CD4-positive, alpha-beta T cell (primary cell): ENCODE measurements at regions of chr21 and their contacts with region 1.

Region 1: GRCh38 chr21:43740497-43741156 is 21.7 kb downstream of the PDXK start:
- DNase-seq: peak in 2 of 14 experiments; percentile 75 to 81
- ATAC-seq: peak; percentile 48
- H3K4me3 ChIP-seq: no peak overlapping the region
- H3K4me3 Mint-ChIP-seq: peak overlapping the region; percentile 65
- H3K27ac ChIP-seq: no peak overlapping the region
- H3K27ac Mint-ChIP-seq: peak overlapping the region; percentile 83
- H3K4me1 ChIP-seq: peaks cover 3% of the 10 kb centered on the region
- H3K4me1 Mint-ChIP-seq: peaks cover 12% of the 10 kb centered on the region
- H3K27me3 ChIP-seq: no peaks in the 10 kb centered on the region
- H3K27me3 Mint-ChIP-seq: no peaks in the 10 kb centered on the region
- CTCF ChIP-seq: no peak

Region 2: DNA sequence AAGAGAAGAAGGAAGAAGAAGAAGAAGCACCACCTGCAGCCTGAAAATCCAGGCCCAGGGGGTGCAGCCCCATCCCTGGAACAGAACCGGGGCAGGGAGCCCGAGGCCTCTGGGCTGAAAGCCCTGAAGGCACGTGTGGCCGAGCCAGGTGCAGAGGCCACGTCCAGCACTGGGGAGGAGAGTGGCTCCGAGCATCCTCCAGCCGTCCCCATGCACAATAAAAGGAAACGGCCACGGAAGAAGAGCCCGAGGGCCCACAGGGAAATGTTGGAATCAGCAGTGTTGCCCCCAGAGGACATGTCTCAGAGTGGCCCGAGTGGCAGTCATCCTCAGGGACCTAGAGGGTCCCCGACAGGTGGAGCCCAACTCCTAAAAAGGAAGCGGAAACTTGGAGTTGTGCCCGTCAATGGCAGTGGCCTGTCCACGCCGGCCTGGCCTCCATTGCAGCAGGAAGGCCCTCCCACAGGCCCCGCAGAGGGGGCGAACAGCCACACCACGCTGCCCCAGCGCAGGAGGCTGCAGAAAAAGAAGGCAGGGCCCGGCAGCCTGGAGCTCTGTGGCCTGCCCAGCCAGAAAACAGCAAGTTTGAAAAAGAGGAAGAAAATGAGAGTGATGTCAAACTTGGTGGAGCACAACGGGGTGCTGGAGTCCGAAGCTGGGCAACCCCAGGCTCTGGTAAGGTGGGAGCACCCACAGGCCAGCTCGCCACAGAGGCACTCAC is 52.9 kb before region 1 on chr21:
- CTCF ChIA-PET with region 1: no interaction called
- POLR2A ChIA-PET with region 1: no interaction called
- intact Hi-C with region 1: loop called in 1 of 2 experiments (anchors 10 kb)
- DNase-seq: no peak
- ATAC-seq: no peak
- H3K4me3 ChIP-seq: no peak overlapping the region
- H3K4me3 Mint-ChIP-seq: no peak overlapping the region
- H3K27ac ChIP-seq: no peak overlapping the region
- H3K27ac Mint-ChIP-seq: no peak overlapping the region
- H3K4me1 ChIP-seq: no peaks in the 10 kb centered on the region
- H3K4me1 Mint-ChIP-seq: no peaks in the 10 kb centered on the region
- H3K27me3 ChIP-seq: no peaks in the 10 kb centered on the region
- H3K27me3 Mint-ChIP-seq: no peaks in the 10 kb centered on the region
- CTCF ChIP-seq: no peak

Region 3: DNA sequence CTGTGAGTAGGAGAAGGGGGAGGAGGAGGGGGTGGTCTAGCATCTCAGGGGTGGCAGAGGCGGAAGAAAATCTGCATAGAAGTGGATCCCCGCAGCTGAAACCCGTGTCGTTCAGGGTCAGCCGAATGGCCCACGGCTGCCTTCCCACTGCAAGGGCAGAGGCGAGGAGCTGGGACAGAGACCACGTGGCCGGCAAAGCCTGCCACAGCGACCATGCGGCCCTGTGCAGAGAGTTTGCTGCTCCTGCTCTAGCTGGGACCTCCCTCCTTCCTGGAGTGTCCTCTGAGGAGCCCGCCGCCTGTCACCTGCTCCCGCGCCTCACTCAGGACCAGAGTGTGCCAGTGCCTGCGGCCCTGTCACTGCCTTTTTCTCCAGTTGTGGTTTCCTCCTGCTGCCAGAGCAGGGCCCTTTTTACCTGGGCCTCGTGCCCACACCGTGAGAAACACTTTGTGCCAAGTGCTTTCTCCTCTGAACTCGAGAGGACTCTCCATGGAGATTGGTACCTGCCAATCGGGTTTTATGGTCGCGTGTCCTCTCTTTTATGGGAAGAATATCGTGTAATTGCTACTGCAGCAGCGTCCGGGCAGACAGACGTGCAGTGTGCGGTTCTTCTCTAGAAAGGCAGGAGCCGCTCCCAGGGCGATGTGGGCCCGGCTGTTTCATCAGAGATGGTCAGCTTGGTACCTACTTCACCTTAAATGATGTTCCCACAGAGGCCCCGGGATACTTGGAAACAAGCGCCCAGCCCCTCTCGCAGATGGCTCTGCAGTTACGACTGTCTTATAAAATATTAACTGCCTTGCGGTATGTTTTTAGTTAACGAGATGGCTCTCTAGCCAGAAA is 607.5 kb after region 1 on chr21:
- CTCF ChIA-PET with region 1: no interaction called
- POLR2A ChIA-PET with region 1: no interaction called
- intact Hi-C with region 1: no loop called
- DNase-seq: no peak
- ATAC-seq: no peak
- H3K4me3 ChIP-seq: no peak overlapping the region
- H3K4me3 Mint-ChIP-seq: peak overlapping the region; percentile 34
- H3K27ac ChIP-seq: no peak overlapping the region
- H3K27ac Mint-ChIP-seq: no peak overlapping the region
- H3K4me1 ChIP-seq: peaks cover 24% of the 10 kb centered on the region
- H3K4me1 Mint-ChIP-seq: peaks cover 11% of the 10 kb centered on the region
- H3K27me3 ChIP-seq: peaks cover 15 to 19% of the 10 kb centered on the region in 2 experiments
- H3K27me3 Mint-ChIP-seq: peaks cover 10% of the 10 kb centered on the region
- CTCF ChIP-seq: no peak